Activated naive CD4-positive, alpha-beta T cell treated with anti-CD3 and anti-CD28 coated beads for 36 hours (primary cell): ENCODE measurements at regions of chr6 and their contacts with region 1.

Region 1: DNA sequence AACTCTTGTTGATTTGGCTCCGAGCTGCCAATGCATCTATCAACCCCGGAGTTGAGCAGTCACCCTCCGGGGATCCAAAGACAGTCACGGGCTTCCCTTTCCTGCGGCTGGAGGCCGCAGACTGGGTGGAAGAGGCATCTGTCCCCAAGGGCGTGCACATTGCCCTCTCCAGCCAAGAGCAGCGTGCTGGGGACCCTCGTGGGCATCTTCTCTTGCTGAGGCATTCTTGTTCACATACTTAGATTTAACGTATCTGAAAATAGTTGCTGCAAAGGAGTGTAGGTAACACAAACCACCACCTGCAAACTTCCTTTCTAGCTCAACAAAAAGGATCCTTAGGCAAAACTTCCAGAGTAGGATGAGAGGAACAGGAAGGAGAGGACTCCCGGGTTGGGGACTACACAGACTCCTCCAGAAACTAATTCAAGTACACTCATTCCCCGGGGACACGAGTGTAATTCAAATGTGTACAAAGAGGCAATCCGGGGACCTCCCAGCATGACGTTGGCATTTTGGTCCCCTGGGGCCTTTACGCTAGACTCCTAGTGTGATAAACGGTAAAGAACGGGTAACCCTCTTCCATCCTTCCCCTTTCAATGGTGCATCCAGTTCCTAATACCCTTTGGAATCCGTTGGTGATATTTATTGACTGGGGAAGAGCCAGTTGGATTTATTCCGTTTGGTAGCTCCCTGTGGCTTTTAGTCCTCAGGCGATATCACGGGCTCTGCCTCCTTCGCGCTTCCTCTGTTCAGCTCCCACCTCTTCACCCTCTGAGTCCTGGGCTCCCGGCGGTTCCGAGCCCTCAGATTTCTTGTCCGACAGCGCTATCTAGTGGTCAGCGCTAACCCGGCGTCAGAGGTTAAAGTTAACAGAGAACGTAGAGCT is 2.7 kb upstream of the COL12A1 start:
- DNase-seq: peak; percentile 91
- H3K4me3 Mint-ChIP-seq: peak overlapping the region; percentile 48
- H3K27ac Mint-ChIP-seq: no peak overlapping the region
- H3K4me1 Mint-ChIP-seq: peaks cover 51% of the 10 kb centered on the region
- H3K27me3 Mint-ChIP-seq: peaks cover 68% of the 10 kb centered on the region

Region 2: DNA sequence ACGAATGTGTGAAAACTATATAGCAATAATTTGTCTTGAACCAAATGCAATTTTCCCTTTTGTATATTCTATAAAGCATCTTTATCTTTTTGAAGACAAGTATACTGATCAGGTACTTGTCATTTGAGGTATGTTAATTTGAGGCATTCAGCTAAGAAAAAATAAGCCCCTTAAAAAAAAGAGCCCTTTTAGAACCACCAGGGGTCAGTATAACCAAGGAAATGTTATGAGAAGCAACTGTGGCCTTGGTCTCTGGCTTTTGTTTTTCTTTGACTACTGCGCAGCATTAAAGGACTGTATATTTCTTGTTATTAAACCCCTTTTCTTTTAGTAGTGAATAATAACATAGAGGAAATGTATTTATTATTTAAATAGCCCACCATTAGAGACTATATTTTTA is 1469.4 kb before region 1 on chr6:
- CTCF ChIA-PET with region 1: interaction called, 19 read pairs
- intact Hi-C with region 1: loop called (anchors 1 kb)
- DNase-seq: no peak
- H3K4me3 Mint-ChIP-seq: no peak overlapping the region
- H3K27ac Mint-ChIP-seq: no peak overlapping the region
- H3K4me1 Mint-ChIP-seq: no peaks in the 10 kb centered on the region
- H3K27me3 Mint-ChIP-seq: no peaks in the 10 kb centered on the region

Region 3: GRCh38 chr6:73985891-73986290 is 1222.7 kb before region 1 on chr6:
- CTCF ChIA-PET with region 1: no interaction called
- intact Hi-C with region 1: loop called (anchors 5 kb)
- DNase-seq: peak; percentile 9
- H3K4me3 Mint-ChIP-seq: no peak overlapping the region
- H3K27ac Mint-ChIP-seq: no peak overlapping the region
- H3K4me1 Mint-ChIP-seq: no peaks in the 10 kb centered on the region
- H3K27me3 Mint-ChIP-seq: no peaks in the 10 kb centered on the region

Region 4: GRCh38 chr6:74409447-74409846 is 799.1 kb before region 1 on chr6:
- CTCF ChIA-PET with region 1: no interaction called
- intact Hi-C with region 1: loop called (anchors 2 kb)
- DNase-seq: no peak
- H3K4me3 Mint-ChIP-seq: no peak overlapping the region
- H3K27ac Mint-ChIP-seq: no peak overlapping the region
- H3K4me1 Mint-ChIP-seq: no peaks in the 10 kb centered on the region
- H3K27me3 Mint-ChIP-seq: no peaks in the 10 kb centered on the region

Region 5: DNA sequence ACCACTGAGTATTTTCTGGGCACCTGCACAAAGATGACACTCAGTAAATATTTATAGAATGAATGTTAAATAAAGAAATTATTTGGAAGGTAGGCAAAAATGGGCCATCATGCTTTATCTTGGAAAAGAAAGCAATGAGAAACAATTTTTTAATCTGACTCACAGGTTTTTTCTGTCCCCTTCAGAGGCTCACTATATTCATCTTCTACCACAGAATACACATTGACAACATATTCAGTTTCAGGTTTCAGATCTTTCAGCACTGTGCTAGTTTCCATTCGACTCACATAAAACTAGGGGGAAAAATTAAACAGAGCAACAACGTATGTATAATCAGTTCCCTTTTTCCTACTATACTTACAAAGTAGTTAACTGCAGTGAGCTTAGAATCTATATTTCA is 61.0 kb before region 1 on chr6:
- CTCF ChIA-PET with region 1: interaction called, 7 read pairs
- intact Hi-C with region 1: loop called (anchors 2 kb)
- DNase-seq: no peak
- H3K4me3 Mint-ChIP-seq: no peak overlapping the region
- H3K27ac Mint-ChIP-seq: no peak overlapping the region
- H3K4me1 Mint-ChIP-seq: peaks cover 2% of the 10 kb centered on the region
- H3K27me3 Mint-ChIP-seq: peaks cover 20% of the 10 kb centered on the region

Region 6: GRCh38 chr6:75526502-75527127 is 318.1 kb after region 1 on chr6:
- CTCF ChIA-PET with region 1: interaction called, 3 read pairs
- intact Hi-C with region 1: loop called (anchors 1 kb)
- DNase-seq: peak; percentile 76
- H3K4me3 Mint-ChIP-seq: no peak overlapping the region
- H3K27ac Mint-ChIP-seq: no peak overlapping the region
- H3K4me1 Mint-ChIP-seq: no peaks in the 10 kb centered on the region
- H3K27me3 Mint-ChIP-seq: peaks cover 14% of the 10 kb centered on the region